ENCODE measurements at regions of chr22 and their contacts with region 1.

Region 1: GRCh38 chr22:46484861-46485595 is 52.4 kb downstream of the CELSR1 start:
- DNase-seq: no peak
- ATAC-seq: no peak
- H3K4me3 ChIP-seq: no peak overlapping the region
- H3K27ac ChIP-seq: no peak overlapping the region
- H3K4me1 ChIP-seq: peaks cover 10% of the 10 kb centered on the region; the same call in 1 of the 2 replicates
- H3K27me3 ChIP-seq: no peaks in the 10 kb centered on the region; a peak in 1 of 4 replicates
- CTCF ChIP-seq: no peak
- EP300 ChIP-seq: no peak
- POLR2A ChIP-seq: no peak
- RAD21 ChIP-seq: no peak

Region 2: GRCh38 chr22:46367707-46368191 is 117.3 kb before region 1 on chr22:
- CTCF ChIA-PET with region 1: interaction called, 13 read pairs
- POLR2A ChIA-PET with region 1: no interaction called
- RAD21 ChIA-PET with region 1: no interaction called
- SMC1A ChIA-PET with region 1: interaction called, 3 read pairs
- in situ Hi-C with region 1: no loop called
- intact Hi-C with region 1: no loop called
- DNase-seq: no peak
- ATAC-seq: peak; percentile 93
- H3K4me3 ChIP-seq: no peak overlapping the region
- H3K27ac ChIP-seq: no peak overlapping the region
- H3K4me1 ChIP-seq: no peaks in the 10 kb centered on the region
- H3K27me3 ChIP-seq: no peaks in the 10 kb centered on the region
- CTCF ChIP-seq: peak; percentile 89 to 99 (median 92); a peak in 5 of 6 replicates
- EP300 ChIP-seq: no peak
- POLR2A ChIP-seq: no peak
- RAD21 ChIP-seq: peak; percentile 74

Region 3: DNA sequence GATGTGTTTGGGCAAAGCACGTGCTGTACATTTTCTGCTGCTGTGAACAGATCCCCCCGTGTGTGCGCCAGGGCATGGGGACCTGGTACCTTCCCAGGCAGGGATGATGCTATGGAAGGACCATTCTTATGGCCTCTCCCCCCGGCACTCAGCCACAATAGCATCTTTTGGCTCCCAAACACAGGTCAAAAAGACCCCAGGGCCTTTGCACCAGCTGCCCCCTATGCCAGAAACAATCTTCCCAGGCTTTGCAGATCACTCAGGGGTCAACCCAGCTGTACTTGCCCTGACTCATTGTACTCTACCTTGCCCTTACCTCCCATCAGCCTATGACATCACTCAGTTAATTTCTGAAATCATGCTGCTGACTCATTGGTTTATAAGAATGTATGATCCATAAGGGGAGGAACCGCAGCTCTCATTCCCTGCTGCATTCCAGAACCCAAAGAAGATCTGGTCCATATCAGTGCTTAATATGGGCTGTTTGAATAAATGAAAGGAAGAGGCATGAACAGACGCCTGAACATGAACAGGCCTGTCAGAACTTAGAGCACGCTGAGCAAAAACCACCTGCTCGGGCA is 48.3 kb before region 1 on chr22:
- CTCF ChIA-PET with region 1: no interaction called
- POLR2A ChIA-PET with region 1: no interaction called
- RAD21 ChIA-PET with region 1: no interaction called
- SMC1A ChIA-PET with region 1: no interaction called
- in situ Hi-C with region 1: no loop called
- intact Hi-C with region 1: no loop called
- DNase-seq: no peak
- ATAC-seq: no peak
- H3K4me3 ChIP-seq: no peak overlapping the region
- H3K27ac ChIP-seq: no peak overlapping the region
- H3K4me1 ChIP-seq: peaks cover 16% of the 10 kb centered on the region
- H3K27me3 ChIP-seq: no peaks in the 10 kb centered on the region
- CTCF ChIP-seq: no peak
- EP300 ChIP-seq: no peak
- POLR2A ChIP-seq: no peak
- RAD21 ChIP-seq: no peak

Region 4: DNA sequence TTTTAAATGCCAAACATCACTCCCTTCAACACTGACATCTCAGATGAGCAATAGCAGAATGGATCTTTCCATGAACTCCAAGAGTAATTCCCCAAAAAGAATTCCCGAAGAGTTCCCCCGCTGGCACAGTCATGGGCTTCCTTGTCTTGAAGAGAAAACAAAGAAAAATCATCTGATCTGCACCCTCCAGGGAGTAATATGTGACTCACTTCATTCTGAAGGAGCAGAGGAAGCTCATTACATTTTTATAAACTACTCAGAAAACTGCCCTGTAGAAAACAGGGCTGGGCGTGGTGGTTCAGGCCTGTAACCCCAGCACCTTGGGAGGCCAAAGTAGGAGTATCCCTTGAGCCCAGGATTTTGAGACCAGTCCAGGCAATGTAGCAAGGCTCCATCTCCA is 16.7 kb after region 1 on chr22:
- CTCF ChIA-PET with region 1: no interaction called
- POLR2A ChIA-PET with region 1: interaction called, 3 read pairs
- RAD21 ChIA-PET with region 1: interaction called, 3 read pairs
- SMC1A ChIA-PET with region 1: interaction called, 3 read pairs
- in situ Hi-C with region 1: no loop called
- intact Hi-C with region 1: loop called (anchors 2 kb)
- DNase-seq: no peak
- ATAC-seq: no peak
- H3K4me3 ChIP-seq: no peak overlapping the region
- H3K27ac ChIP-seq: no peak overlapping the region
- H3K4me1 ChIP-seq: peaks cover 3% of the 10 kb centered on the region; the same call in 1 of the 2 replicates
- H3K27me3 ChIP-seq: peaks cover 0 to 9% of the 10 kb centered on the region in 2 experiments; a peak in 1 of 4 replicates
- CTCF ChIP-seq: no peak
- EP300 ChIP-seq: no peak
- POLR2A ChIP-seq: no peak
- RAD21 ChIP-seq: no peak

Region 5: GRCh38 chr22:46514592-46515207 is 29.7 kb after region 1 on chr22:
- CTCF ChIA-PET with region 1: no interaction called
- POLR2A ChIA-PET with region 1: no interaction called
- RAD21 ChIA-PET with region 1: interaction called, 10 read pairs
- SMC1A ChIA-PET with region 1: interaction called, 5 read pairs
- in situ Hi-C with region 1: no loop called
- intact Hi-C with region 1: no loop called
- DNase-seq: no peak
- ATAC-seq: no peak; the same call in 2 of the 3 replicates
- H3K4me3 ChIP-seq: no peak overlapping the region
- H3K27ac ChIP-seq: no peak overlapping the region
- H3K4me1 ChIP-seq: no peaks in the 10 kb centered on the region
- H3K27me3 ChIP-seq: no peaks in the 10 kb centered on the region
- CTCF ChIP-seq: no peak
- EP300 ChIP-seq: no peak
- POLR2A ChIP-seq: no peak
- RAD21 ChIP-seq: no peak